Panc1 (cell line): ENCODE measurements at regions of chr1 and their contacts with region 1.

Region 1: GRCh38 chr1:17606826-17607440 is 67.4 kb downstream of the ARHGEF10L start:
- DNase-seq: peak; percentile 43
- ATAC-seq: peak; percentile 74
- H3K4me3 ChIP-seq: no peak overlapping the region
- H3K27ac ChIP-seq: no peak overlapping the region
- H3K4me1 ChIP-seq: no peaks in the 10 kb centered on the region
- H3K27me3 ChIP-seq: no peaks in the 10 kb centered on the region
- CTCF ChIP-seq: peak; percentile 95

Region 2: DNA sequence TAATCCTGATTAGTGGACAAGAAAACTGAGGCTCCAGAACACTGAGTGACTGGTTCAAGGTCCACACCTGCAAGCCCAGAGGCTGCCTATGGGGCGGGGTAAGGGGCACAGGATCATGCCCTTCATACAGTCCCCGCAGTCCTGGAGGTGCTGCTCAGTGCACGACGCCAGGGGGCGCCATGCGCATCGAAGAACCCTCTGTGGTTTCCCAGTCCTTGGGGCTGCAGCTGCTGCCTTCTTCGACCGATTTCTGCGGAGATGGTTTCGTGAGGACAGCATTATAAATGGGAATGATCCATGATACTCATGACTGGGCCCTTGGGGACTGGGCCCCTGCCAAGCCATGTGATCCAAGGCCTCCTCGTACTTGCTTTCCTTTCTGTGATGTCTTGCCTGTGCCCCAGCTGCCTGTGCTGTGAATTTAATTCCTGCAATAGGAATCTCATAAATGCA is 104.6 kb before region 1 on chr1:
- CTCF ChIA-PET with region 1: interaction called, 26 read pairs
- POLR2A ChIA-PET with region 1: no interaction called
- in situ Hi-C with region 1: no loop called
- intact Hi-C with region 1: loop called (anchors 2 kb)
- DNase-seq: no peak
- ATAC-seq: peak; percentile 95
- H3K4me3 ChIP-seq: no peak overlapping the region
- H3K27ac ChIP-seq: no peak overlapping the region
- H3K4me1 ChIP-seq: peaks cover 2% of the 10 kb centered on the region; the same call in 1 of the 2 replicates
- H3K27me3 ChIP-seq: no peaks in the 10 kb centered on the region
- CTCF ChIP-seq: peak; percentile 93

Region 3: DNA sequence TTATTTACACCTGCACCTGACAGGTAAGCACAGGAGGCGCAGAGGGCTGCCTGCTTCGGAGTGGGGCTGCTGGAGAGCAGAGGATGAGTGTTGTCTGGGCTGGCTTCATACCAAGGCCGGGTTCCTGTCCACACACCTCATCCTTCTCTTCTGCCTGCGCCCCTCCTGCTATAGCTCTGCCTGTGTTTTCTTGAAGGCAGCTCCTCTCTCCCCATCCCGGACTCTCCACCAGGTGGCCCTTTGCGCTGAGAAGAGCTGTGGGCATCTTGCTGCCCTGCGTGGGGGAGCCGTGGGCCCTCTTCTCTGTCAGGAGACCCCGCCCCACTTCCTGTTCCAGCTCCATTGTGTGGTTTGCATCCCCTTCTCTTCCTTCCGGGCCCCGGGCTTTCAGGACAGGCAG is 32.4 kb before region 1 on chr1:
- CTCF ChIA-PET with region 1: interaction called, 20 read pairs
- POLR2A ChIA-PET with region 1: no interaction called
- in situ Hi-C with region 1: no loop called
- intact Hi-C with region 1: no loop called
- DNase-seq: no peak
- ATAC-seq: peak; percentile 70
- H3K4me3 ChIP-seq: no peak overlapping the region
- H3K27ac ChIP-seq: no peak overlapping the region
- H3K4me1 ChIP-seq: no peaks in the 10 kb centered on the region
- H3K27me3 ChIP-seq: no peaks in the 10 kb centered on the region
- CTCF ChIP-seq: no peak